Gastrocnemius medialis (tissue), 4 donors: ENCODE measurements at regions of chr16 and their contacts with region 1.

Region 1: DNA sequence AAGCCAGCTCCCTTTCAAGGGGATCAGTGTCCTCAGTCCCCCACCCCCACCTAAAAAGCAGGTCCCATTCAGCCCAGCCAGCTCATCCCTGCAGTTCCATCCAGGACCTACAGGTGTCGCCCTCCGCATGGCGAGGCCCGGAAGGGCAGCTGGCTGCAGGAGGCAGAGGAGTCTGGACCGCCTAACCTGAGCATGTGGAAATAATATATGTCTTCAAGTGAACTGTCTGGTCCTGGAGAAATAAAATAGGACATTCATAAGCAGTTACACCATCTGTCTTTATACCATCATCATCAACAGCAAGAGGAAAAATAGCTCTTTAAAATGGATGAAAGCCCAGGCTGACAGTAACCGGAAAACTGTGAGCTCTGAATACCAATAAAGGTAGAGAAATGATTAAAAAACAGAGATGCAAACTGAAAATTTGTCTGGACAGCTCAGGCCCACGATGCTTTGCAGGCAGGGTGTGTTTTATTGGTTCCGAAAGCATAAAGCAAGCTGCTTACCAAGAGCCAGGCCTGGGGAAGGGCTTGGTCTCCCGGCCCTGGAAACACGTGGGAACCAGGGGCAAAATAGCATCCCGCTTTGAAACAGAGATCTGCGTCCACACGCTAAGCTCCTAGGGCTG is 215.2 kb downstream of the ZFHX3 start:
- DNase-seq: peak; percentile 76 to 87
- ATAC-seq: peak; percentile 92 to 94
- H3K4me3 ChIP-seq: no peak overlapping the region
- H3K27ac ChIP-seq: peak overlapping the region; percentile 63 to 73 (median 70)
- H3K4me1 ChIP-seq: peaks cover 27 to 32% of the 10 kb centered on the region in 2 donors
- H3K27me3 ChIP-seq: no peaks in the 10 kb centered on the region
- CTCF ChIP-seq: peak; percentile 93 to 99 (median 94)
- POLR2A ChIP-seq: no peak

Region 2: DNA sequence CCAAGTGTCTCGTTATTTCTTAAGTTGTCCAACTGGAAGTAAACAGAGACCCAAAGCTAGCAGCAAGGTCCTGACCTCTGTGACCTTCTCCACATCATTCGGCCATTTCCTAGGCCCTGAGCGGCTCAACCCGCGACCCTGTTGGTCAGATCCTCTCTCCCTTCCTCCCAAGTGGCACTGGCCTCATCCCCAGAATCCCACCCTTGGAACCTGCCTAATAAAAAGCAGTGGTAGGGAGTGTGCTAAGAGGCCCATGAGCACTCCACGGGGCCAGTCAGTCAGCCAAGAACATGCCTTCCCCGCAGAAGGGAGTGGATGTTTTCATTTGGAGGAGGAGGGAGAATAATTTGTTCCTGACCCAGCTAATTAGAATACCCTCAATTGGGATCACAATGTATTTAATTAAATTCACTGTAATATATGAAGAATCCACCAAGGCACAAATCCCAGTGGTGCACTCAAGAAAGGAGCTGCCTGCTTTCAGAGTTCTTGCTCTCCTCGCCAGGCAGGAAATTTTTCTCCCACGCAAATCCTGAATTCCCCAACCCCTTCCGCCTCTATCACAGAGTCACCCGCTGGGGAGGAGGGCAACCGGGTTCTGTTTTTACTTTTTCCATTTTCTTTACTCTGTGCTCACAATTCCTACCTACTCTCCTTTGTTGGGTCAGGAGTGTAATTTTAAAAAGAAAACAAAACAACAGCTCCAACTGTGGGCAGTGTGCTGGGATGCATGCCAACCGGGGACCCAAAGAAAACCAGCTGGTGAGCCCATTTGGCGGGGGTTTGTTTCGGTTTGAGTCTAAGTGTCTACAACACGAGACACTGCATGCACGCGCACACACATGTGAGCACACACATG is 61.8 kb after region 1 on chr16:
- in situ Hi-C with region 1: no loop called
- intact Hi-C with region 1: loop called (anchors 5 kb)
- DNase-seq: no peak
- ATAC-seq: no peak
- H3K4me3 ChIP-seq: no peak overlapping the region
- H3K27ac ChIP-seq: peak overlapping the region; percentile 5 to 71 (median 32)
- H3K4me1 ChIP-seq: peaks cover 48 to 50% of the 10 kb centered on the region in 2 donors
- H3K27me3 ChIP-seq: no peaks in the 10 kb centered on the region
- CTCF ChIP-seq: no peak
- POLR2A ChIP-seq: no peak

Region 3: GRCh38 chr16:72961121-72961763 is 128.5 kb after region 1 on chr16:
- in situ Hi-C with region 1: no loop called
- intact Hi-C with region 1: loop called (anchors 5 kb)
- DNase-seq: peak; percentile 85 to 89
- ATAC-seq: peak; percentile 86 to 87
- H3K4me3 ChIP-seq: peak overlapping the region; percentile 20 to 34 (median 21)
- H3K27ac ChIP-seq: peak overlapping the region; percentile 81 to 91 (median 81)
- H3K4me1 ChIP-seq: peaks cover 39 to 52% of the 10 kb centered on the region in 2 donors
- H3K27me3 ChIP-seq: no peaks in the 10 kb centered on the region
- CTCF ChIP-seq: peak in 4 of 5 experiments; percentile 28 to 44 (median 34)
- POLR2A ChIP-seq: peak in 1 of 2 donors; percentile 20

Region 4: DNA sequence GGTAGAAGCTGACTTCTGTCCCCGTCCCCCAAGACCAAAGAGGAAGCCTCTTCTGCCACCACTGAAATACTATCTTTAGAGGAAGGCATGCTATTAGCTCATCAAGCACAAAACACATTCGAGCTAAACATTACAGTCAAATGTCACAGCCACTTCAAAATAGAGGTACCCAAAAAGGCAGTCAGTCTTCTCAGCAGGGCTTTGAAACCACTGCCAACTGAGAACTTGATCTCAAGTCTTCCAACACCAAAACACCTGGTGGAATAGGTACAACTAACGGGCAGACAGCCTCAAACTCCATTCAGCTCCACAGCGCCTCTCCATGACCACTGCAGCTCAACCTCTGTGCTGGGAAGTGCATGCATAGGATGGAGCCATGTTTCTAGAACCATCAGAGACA is 179.2 kb after region 1 on chr16:
- in situ Hi-C with region 1: no loop called
- intact Hi-C with region 1: loop called (anchors 1 kb)
- DNase-seq: peak; percentile 72 to 84
- ATAC-seq: peak; percentile 86 to 87
- H3K4me3 ChIP-seq: peak overlapping the region in 1 of 4 donors; percentile 28
- H3K27ac ChIP-seq: peak overlapping the region; percentile 75 to 83 (median 81)
- H3K4me1 ChIP-seq: peaks cover 76 to 84% of the 10 kb centered on the region in 2 donors
- H3K27me3 ChIP-seq: no peaks in the 10 kb centered on the region
- CTCF ChIP-seq: peak in 4 of 5 experiments; percentile 20 to 47 (median 36)
- POLR2A ChIP-seq: peak; percentile 12 to 36

Region 5: GRCh38 chr16:73058221-73058615 is 225.5 kb after region 1 on chr16:
- in situ Hi-C with region 1: loop called in 3 of 4 experiments (anchors 10 to 25 kb)
- intact Hi-C with region 1: no loop called
- DNase-seq: no peak
- ATAC-seq: peak; percentile 26 to 37
- H3K4me3 ChIP-seq: peak overlapping the region; percentile 64 to 75 (median 72)
- H3K27ac ChIP-seq: peak overlapping the region; percentile 94 to 99 (median 99)
- H3K4me1 ChIP-seq: peaks cover 38 to 58% of the 10 kb centered on the region in 2 donors
- H3K27me3 ChIP-seq: peaks cover 0 to 10% (median 0%) of the 10 kb centered on the region in 3 donors
- CTCF ChIP-seq: no peak
- POLR2A ChIP-seq: no peak

Region 6: GRCh38 chr16:73196670-73197069 is 363.9 kb after region 1 on chr16:
- in situ Hi-C with region 1: loop called (anchors 5 to 10 kb)
- intact Hi-C with region 1: loop called (anchors 1 kb)
- DNase-seq: peak; percentile 51 to 80
- ATAC-seq: peak; percentile 91 to 99
- H3K4me3 ChIP-seq: no peak overlapping the region
- H3K27ac ChIP-seq: no peak overlapping the region
- H3K4me1 ChIP-seq: peaks cover 0 to 3% of the 10 kb centered on the region in 2 donors
- H3K27me3 ChIP-seq: no peaks in the 10 kb centered on the region
- CTCF ChIP-seq: peak; percentile 68 to 79 (median 73)
- POLR2A ChIP-seq: no peak